ENCODE measurements at regions of chr5 and their contacts with region 1.

Region 1: DNA sequence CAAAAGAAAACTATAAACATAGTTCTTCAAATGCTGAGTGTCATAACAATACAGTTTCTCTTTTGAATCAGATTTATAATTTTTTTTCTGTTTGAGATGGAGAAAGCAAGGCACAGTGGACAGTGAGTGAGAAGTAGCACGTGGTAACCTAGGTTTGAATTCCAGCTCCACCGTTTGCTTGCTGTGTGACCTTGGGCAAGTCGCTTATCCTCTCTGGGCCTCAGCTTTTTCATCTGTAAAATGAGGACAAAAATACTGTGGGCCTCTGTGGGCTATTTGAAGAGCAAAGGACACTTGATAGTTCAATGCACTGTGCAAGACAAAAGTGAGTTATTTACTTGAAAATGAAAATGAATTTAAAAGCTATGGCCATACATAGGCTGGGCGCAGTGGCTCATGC is 187.7 kb upstream of the TBCA start:
- DNase-seq: no peak
- H3K4me3 ChIP-seq: no peak overlapping the region
- H3K4me3 Mint-ChIP-seq: no peak overlapping the region
- H3K27ac Mint-ChIP-seq: no peak overlapping the region
- H3K4me1 ChIP-seq: no peaks in the 10 kb centered on the region
- H3K4me1 Mint-ChIP-seq: no peaks in the 10 kb centered on the region
- H3K27me3 ChIP-seq: no peaks in the 10 kb centered on the region
- H3K27me3 Mint-ChIP-seq: peaks cover 2% of the 10 kb centered on the region
- CTCF ChIP-seq: no peak

Region 2: DNA sequence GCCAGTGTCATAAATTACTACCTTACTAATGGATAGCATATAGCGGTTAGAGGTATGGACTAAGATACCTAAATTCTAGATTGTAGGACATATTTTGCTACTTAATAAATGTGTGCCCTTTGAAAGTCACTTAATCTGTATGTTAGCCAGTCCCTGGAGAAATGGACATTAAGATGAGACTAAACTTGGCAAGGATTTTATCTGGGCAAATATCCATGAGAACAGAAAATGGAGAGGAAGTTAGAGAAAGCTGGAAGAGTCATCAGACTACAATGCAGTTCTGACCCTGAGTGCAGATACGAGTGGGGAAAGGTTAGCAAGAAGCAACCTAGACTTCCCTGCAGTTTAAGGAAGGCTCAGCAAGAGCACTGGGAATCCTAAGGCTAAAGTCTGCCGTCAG is 220.6 kb before region 1 on chr5:
- CTCF ChIA-PET with region 1: no interaction called
- POLR2A ChIA-PET with region 1: no interaction called
- intact Hi-C with region 1: no loop called
- DNase-seq: no peak
- H3K4me3 ChIP-seq: no peak overlapping the region
- H3K4me3 Mint-ChIP-seq: no peak overlapping the region
- H3K27ac Mint-ChIP-seq: no peak overlapping the region
- H3K4me1 ChIP-seq: no peaks in the 10 kb centered on the region
- H3K4me1 Mint-ChIP-seq: no peaks in the 10 kb centered on the region
- H3K27me3 ChIP-seq: no peaks in the 10 kb centered on the region
- H3K27me3 Mint-ChIP-seq: no peaks in the 10 kb centered on the region
- CTCF ChIP-seq: no peak

Region 3: GRCh38 chr5:77943851-77944250 is 19.9 kb before region 1 on chr5:
- CTCF ChIA-PET with region 1: no interaction called
- POLR2A ChIA-PET with region 1: no interaction called
- intact Hi-C with region 1: loop called (anchors 1 kb)
- DNase-seq: no peak
- H3K4me3 ChIP-seq: no peak overlapping the region
- H3K4me3 Mint-ChIP-seq: no peak overlapping the region
- H3K27ac Mint-ChIP-seq: no peak overlapping the region
- H3K4me1 ChIP-seq: no peaks in the 10 kb centered on the region
- H3K4me1 Mint-ChIP-seq: no peaks in the 10 kb centered on the region
- H3K27me3 ChIP-seq: no peaks in the 10 kb centered on the region; the same call in 1 of the 2 replicates
- H3K27me3 Mint-ChIP-seq: peaks cover 19% of the 10 kb centered on the region
- CTCF ChIP-seq: no peak